Heart right ventricle (tissue), 16 donors: ENCODE measurements at regions of chr9 and their contacts with region 1.

Region 1: GRCh38 chr9:4315582-4316215 is 15.8 kb upstream of the GLIS3 start:
- DNase-seq: peak; percentile 69 to 83
- ATAC-seq: peak; percentile 76 to 95 (median 88)
- H3K4me3 ChIP-seq: no peak overlapping the region
- H3K27ac ChIP-seq: no peak overlapping the region
- H3K4me1 ChIP-seq: peaks cover 0 to 11% (median 6%) of the 10 kb centered on the region in 9 donors
- H3K27me3 ChIP-seq: no peaks in the 10 kb centered on the region
- CTCF ChIP-seq: peak; percentile 60 to 91 (median 87)

Region 2: GRCh38 chr9:4339357-4339756 is 23.7 kb after region 1 on chr9:
- intact Hi-C with region 1: loop called in 3 of 10 experiments (anchors 1 to 2 kb)
- DNase-seq: peak; percentile 79 to 81
- ATAC-seq: peak in 7 of 8 donors; percentile 49 to 85 (median 68)
- H3K4me3 ChIP-seq: no peak overlapping the region
- H3K27ac ChIP-seq: no peak overlapping the region
- H3K4me1 ChIP-seq: peaks cover 0 to 9% (median 3%) of the 10 kb centered on the region in 9 donors
- H3K27me3 ChIP-seq: no peaks in the 10 kb centered on the region
- CTCF ChIP-seq: peak; percentile 81 to 95 (median 92)

Region 3: GRCh38 chr9:4366591-4367330 is 51.1 kb after region 1 on chr9:
- intact Hi-C with region 1: loop called in 7 of 10 experiments (anchors 1 to 10 kb)
- DNase-seq: no peak
- ATAC-seq: peak in 2 of 8 donors; percentile 31 to 42
- H3K4me3 ChIP-seq: no peak overlapping the region
- H3K27ac ChIP-seq: no peak overlapping the region
- H3K4me1 ChIP-seq: no peaks in the 10 kb centered on the region
- H3K27me3 ChIP-seq: no peaks in the 10 kb centered on the region
- CTCF ChIP-seq: peak; percentile 14 to 75 (median 57)

Region 4: GRCh38 chr9:4382722-4383317 is 67.1 kb after region 1 on chr9:
- intact Hi-C with region 1: no loop called
- DNase-seq: no peak
- ATAC-seq: peak in 3 of 8 donors; percentile 34 to 50 (median 47)
- H3K4me3 ChIP-seq: no peak overlapping the region
- H3K27ac ChIP-seq: no peak overlapping the region
- H3K4me1 ChIP-seq: no peaks in the 10 kb centered on the region
- H3K27me3 ChIP-seq: peaks cover 0 to 3% (median 0%) of the 10 kb centered on the region in 7 donors
- CTCF ChIP-seq: peak; percentile 12 to 75 (median 57)